ENCODE measurements at regions of chr7 and their contacts with region 1.

Region 1: GRCh38 chr7:1555809-1556540 is at the start of gene TMEM184A:
- DNase-seq: peak; percentile 85 to 88
- H3K4me3 ChIP-seq: no peak within 1 kb of the TSS
- H3K27ac ChIP-seq: no peak within 1 kb of the TSS
- H3K4me1 ChIP-seq: peaks cover 0 to 15% of the 10 kb centered on the region in 2 donors
- H3K27me3 ChIP-seq: no peaks in the 10 kb centered on the region
- CTCF ChIP-seq: peak; percentile 32 to 83 (median 77)
- POLR2A ChIP-seq: no peak
- total RNA-seq, gene TMEM184A: 0.44 to 3.0 (median 0.70) TPM

Region 2: GRCh38 chr7:1503816-1504775 is 51.9 kb before region 1 on chr7 and contains the start of gene INTS1:
- intact Hi-C with region 1: loop called (anchors 5 kb)
- DNase-seq: peak; percentile 96
- H3K4me3 ChIP-seq: peak within 1 kb of the TSS; percentile 64 to 93 (median 87)
- H3K27ac ChIP-seq: peak within 1 kb of the TSS in 2 of 3 donors; percentile 68 to 69
- H3K4me1 ChIP-seq: peaks cover 9 to 13% of the 10 kb centered on the region in 2 donors
- H3K27me3 ChIP-seq: no peaks in the 10 kb centered on the region
- CTCF ChIP-seq: peak in 5 of 6 experiments; percentile 53 to 99 (median 96)
- POLR2A ChIP-seq: peak in 1 of 2 donors; percentile 57
- total RNA-seq, gene INTS1: 34.5 to 72.3 (median 65.5) TPM

Region 3: DNA sequence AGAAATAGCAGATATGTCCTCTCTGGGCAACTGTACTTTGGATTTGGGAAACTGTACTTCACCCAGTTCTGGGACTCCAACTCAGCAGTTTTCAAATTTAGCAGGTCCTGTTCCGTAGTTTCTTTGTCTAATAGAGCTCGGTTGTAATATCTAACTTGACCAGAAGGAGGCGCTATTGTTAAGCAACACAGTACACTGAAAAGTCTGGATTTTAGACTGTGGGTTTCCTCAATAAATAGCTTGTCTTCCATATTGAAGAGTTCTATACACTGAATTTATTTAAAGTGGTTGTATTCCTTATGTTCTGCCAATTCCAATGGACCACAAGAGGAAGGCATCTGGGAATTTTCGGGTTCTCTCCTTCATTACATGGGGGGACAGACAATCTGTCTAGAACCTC is 153.9 kb after region 1 on chr7:
- intact Hi-C with region 1: no loop called
- DNase-seq: no peak
- H3K4me3 ChIP-seq: no peak overlapping the region
- H3K27ac ChIP-seq: no peak overlapping the region
- H3K4me1 ChIP-seq: peaks cover 7 to 8% of the 10 kb centered on the region in 2 donors
- H3K27me3 ChIP-seq: no peaks in the 10 kb centered on the region
- CTCF ChIP-seq: no peak
- POLR2A ChIP-seq: no peak

Measured in thyroid gland (tissue), 4 donors.